Heart right ventricle (tissue), 16 donors: ENCODE measurements at regions of chr16 and their contacts with region 1.

Region 1: DNA sequence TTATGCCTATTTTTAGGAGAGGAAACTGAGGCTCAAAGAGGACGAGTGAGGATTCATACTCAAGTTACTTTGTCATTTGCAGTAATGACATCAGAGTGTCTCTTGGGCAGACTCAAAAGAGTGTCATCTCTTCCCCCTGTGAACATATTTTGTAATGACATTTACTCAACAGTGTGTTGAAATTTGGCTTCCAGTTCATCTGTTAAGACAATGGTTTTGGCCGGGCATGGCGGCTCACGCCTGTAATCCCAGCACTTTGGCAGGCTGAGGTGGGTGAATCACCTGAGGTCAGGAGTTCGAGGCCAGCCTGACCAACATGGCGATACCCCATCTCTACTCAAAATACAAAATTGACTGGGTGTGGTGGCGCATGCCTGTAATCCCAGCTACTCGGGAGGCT is 28.9 kb downstream of the WFDC1 start:
- DNase-seq: no peak
- ATAC-seq: no peak
- H3K4me3 ChIP-seq: no peak overlapping the region
- H3K27ac ChIP-seq: no peak overlapping the region
- H3K4me1 ChIP-seq: no peaks in the 10 kb centered on the region
- H3K27me3 ChIP-seq: peaks cover 0 to 22% (median 6%) of the 10 kb centered on the region in 7 donors
- CTCF ChIP-seq: no peak

Region 2: GRCh38 chr16:84255050-84255810 is 68.4 kb before region 1 on chr16:
- intact Hi-C with region 1: loop called in 1 of 10 experiments (anchors 5 kb)
- DNase-seq: no peak
- ATAC-seq: no peak
- H3K4me3 ChIP-seq: no peak overlapping the region
- H3K27ac ChIP-seq: no peak overlapping the region
- H3K4me1 ChIP-seq: no peaks in the 10 kb centered on the region
- H3K27me3 ChIP-seq: peaks cover 0 to 14% (median 2%) of the 10 kb centered on the region in 7 donors
- CTCF ChIP-seq: no peak

Region 3: DNA sequence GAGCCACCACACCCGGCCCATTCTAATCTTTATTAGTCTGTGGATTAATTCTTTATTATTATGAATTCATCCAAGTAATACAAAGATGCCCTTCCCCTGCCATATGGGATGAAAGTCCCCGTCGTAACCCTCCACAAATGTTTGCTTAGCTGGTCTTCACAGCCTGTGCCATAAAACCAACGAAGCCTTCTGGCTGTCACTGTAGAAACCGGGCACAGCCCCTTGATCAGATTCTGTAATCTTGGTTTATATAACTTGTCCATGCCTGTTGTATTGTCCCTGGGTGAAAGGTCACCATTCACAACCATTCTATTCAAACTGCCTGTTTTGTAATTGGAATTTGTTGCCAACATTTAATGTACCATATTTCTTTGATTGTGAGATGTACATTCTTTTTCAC is 111.2 kb after region 1 on chr16:
- intact Hi-C with region 1: no loop called
- DNase-seq: no peak
- ATAC-seq: no peak
- H3K4me3 ChIP-seq: no peak overlapping the region
- H3K27ac ChIP-seq: no peak overlapping the region
- H3K4me1 ChIP-seq: no peaks in the 10 kb centered on the region
- H3K27me3 ChIP-seq: peaks cover 0 to 23% (median 2%) of the 10 kb centered on the region in 7 donors
- CTCF ChIP-seq: no peak

Region 4: DNA sequence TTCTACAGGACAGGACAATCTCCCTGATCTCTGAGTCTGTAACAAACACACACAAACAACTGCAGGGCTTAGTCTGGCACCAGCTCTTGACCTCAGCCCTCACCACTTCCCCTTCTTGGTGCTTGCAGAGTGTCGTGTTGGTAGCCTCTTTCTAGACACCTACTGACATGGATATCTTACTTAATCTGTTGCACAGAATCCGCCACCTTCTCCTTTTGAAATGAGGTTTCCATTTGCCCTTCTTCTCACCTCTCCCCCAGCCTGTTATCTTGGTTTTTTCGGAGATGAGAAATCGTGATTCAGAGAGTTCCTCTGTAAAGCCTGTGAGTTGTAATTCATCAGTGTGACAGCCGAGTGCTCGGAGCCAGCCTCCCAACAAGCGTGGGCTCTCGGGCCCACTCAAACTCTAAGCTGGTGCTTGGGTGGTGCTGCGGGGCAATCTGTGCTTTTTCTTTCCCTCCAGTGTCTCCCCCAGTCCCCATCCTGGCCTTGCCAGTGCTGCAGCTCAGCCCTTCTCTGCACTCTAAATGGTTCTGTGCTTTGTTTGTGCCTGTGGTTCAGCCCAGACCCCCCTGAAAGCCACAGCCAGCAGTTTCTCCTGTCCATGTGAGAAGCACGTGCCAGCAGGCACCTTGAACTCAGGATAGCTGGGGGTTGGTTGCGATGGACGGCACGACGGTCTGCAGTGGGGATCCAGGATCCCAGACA is 732.0 kb after region 1 on chr16:
- intact Hi-C with region 1: no loop called
- DNase-seq: no peak
- ATAC-seq: peak; percentile 32 to 87 (median 61)
- H3K4me3 ChIP-seq: peak overlapping the region in 7 of 10 donors; percentile 6 to 41 (median 31)
- H3K27ac ChIP-seq: peak overlapping the region; percentile 6 to 88 (median 55)
- H3K4me1 ChIP-seq: peaks cover 2 to 56% (median 25%) of the 10 kb centered on the region in 9 donors
- H3K27me3 ChIP-seq: no peaks in the 10 kb centered on the region
- CTCF ChIP-seq: no peak